GM12878 (cell line): ENCODE measurements at regions of chr1 and their contacts with region 1.

Region 1: GRCh38 chr1:214476958-214477870 is 74.2 kb downstream of the PTPN14 start:
- DNase-seq: no peak
- ATAC-seq: peak; percentile 74
- H3K4me3 ChIP-seq: no peak overlapping the region
- H3K27ac ChIP-seq: no peak overlapping the region
- H3K4me1 ChIP-seq: no peaks in the 10 kb centered on the region
- H3K27me3 ChIP-seq: no peaks in the 10 kb centered on the region
- CTCF ChIP-seq: no peak
- EP300 ChIP-seq: no peak
- POLR2A ChIP-seq: no peak
- RAD21 ChIP-seq: no peak

Region 2: GRCh38 chr1:214445199-214445598 is 32.0 kb before region 1 on chr1:
- CTCF ChIA-PET with region 1: interaction called, 3 read pairs
- POLR2A ChIA-PET with region 1: interaction called, 3 read pairs
- RAD21 ChIA-PET with region 1: interaction called, 9 read pairs
- SMC1A ChIA-PET with region 1: interaction called, 30 read pairs
- in situ Hi-C with region 1: no loop called
- intact Hi-C with region 1: no loop called
- DNase-seq: no peak
- ATAC-seq: peak; percentile 5; the same call in 2 of the 3 replicates
- H3K4me3 ChIP-seq: no peak overlapping the region
- H3K27ac ChIP-seq: no peak overlapping the region
- H3K4me1 ChIP-seq: no peaks in the 10 kb centered on the region; the same call in 1 of the 2 replicates
- H3K27me3 ChIP-seq: no peaks in the 10 kb centered on the region
- CTCF ChIP-seq: no peak
- EP300 ChIP-seq: no peak
- POLR2A ChIP-seq: no peak
- RAD21 ChIP-seq: no peak

Region 3: DNA sequence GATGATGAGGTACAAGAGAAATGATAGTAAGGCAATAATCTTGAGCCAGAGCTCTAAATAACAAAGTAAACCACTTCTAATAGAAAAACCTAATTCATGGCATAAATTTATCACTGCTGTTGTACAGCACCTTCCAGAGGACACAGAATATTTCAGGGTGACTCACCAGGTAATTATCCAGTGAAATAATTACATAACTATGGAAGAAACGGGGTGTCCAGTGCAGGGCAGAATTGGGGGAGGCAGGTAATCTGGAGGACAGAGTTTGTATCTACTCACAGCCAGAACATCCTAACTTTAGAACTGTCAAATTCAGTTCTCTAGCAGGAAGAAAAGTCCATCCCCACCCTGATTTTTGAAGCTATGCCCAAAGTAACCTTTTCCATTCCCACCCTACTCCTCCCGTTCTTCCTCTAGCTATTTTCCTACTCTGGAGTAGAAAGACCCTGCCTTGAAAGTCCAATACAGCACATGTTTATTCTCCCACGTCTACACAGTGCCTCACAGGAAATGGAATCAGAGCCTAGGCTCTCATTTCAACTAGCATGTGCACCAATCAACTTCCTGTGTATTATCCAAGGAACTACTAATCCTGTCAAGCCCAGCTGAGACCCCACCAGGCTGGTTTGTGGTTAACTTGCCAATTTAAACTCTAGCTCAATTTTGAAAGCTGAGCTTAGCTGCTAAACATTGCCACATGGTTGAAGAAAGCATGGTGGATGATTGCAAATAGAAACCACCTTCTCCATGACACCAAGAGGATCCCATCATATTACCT is 22.4 kb before region 1 on chr1:
- CTCF ChIA-PET with region 1: interaction called, 6 read pairs
- POLR2A ChIA-PET with region 1: interaction called, 8 read pairs
- RAD21 ChIA-PET with region 1: interaction called, 7 read pairs
- SMC1A ChIA-PET with region 1: interaction called, 17 read pairs
- in situ Hi-C with region 1: no loop called
- intact Hi-C with region 1: no loop called
- DNase-seq: no peak
- ATAC-seq: peak; percentile 24; the same call in 1 of the 3 replicates
- H3K4me3 ChIP-seq: no peak overlapping the region
- H3K27ac ChIP-seq: no peak overlapping the region
- H3K4me1 ChIP-seq: no peaks in the 10 kb centered on the region
- H3K27me3 ChIP-seq: no peaks in the 10 kb centered on the region
- CTCF ChIP-seq: no peak
- EP300 ChIP-seq: no peak
- POLR2A ChIP-seq: no peak
- RAD21 ChIP-seq: no peak

Region 4: DNA sequence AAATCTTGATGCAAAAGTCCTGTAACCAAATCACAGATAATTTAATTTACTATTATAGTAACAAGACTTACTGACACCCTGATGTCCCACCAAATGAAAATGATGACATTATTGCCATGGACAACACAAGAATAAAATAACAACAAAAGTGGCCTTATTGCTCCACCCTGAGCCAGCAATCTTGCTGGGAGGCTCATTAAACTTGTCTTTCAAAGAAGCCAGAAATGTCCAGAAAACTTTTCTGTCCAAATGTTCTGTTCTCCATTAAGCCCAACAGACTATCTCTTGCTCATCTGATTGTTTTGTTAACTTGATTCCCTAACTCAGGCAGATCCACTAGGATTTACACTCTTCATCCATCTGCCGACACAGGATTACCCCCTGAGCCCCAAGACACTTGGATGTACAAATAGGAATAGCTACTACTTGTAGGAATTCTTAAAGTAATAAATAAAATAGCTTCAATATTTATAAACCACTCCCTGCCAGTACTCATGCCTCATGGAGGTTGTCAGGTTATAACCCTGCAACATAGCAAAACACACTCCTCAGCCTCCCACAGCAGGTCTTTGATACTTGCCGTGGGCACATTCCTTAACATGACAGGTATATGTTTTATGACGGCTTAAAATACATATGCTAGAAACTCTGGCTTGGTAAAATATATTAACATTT is 10.7 kb before region 1 on chr1:
- CTCF ChIA-PET with region 1: interaction called, 10 read pairs
- POLR2A ChIA-PET with region 1: interaction called, 5 read pairs
- RAD21 ChIA-PET with region 1: no interaction called
- SMC1A ChIA-PET with region 1: interaction called, 16 read pairs
- in situ Hi-C with region 1: no loop called
- intact Hi-C with region 1: no loop called
- DNase-seq: no peak
- ATAC-seq: no peak
- H3K4me3 ChIP-seq: no peak overlapping the region
- H3K27ac ChIP-seq: no peak overlapping the region
- H3K4me1 ChIP-seq: no peaks in the 10 kb centered on the region
- H3K27me3 ChIP-seq: no peaks in the 10 kb centered on the region; a peak in 1 of 4 replicates
- CTCF ChIP-seq: no peak
- EP300 ChIP-seq: no peak
- POLR2A ChIP-seq: no peak
- RAD21 ChIP-seq: no peak